ENCODE measurements at regions of chrX and their contacts with region 1.

Region 1: DNA sequence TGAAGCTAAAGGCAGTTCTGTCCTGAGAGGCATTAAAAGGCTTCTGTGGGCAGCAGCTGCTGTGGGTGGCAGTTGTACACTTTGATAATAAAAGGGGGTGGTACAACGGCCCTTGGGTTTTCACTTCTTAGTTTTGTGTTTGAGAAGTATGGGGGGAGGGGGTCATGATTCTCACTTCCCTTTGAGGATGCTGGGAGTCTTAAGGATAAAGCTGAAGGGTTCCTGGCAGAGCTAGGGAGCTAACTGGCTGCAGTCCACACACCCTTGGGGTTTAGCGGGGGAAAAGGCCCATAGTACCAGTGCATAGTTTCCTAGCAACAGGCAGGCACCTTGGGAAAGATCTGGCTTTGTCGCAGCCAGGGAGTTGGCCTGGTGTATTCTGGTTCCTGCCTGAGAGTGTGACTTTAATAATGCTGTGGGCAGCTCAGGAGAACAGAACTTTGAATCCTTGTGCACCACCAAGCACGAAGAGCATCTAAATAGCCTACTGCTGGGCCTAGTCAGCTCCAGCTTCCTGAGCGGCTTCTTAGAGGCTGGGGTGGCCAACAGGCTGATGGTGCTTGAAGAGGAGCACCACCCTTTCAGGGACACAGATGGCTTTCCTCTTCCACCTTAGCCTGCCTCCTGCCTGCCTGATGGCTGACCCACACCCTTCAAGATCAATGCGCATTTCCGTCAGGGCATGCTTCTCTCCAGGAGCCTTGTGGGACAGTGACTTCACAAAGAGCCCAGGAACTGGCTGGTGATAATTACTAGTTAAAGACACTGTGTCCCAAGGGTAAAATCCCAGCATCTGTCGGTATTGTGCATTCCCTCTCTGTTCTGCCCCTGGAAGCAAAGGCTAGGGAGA is 12.5 kb downstream of the ZBTB33 start:
- DNase-seq: no peak
- H3K4me3 Mint-ChIP-seq: no peak overlapping the region
- H3K27ac Mint-ChIP-seq: no peak overlapping the region
- H3K4me1 Mint-ChIP-seq: peaks cover 11% of the 10 kb centered on the region
- H3K27me3 Mint-ChIP-seq: peaks cover 14% of the 10 kb centered on the region
- CTCF ChIP-seq: no peak

Region 2: GRCh38 chrX:119382606-119383005 is 880.5 kb before region 1 on chrX:
- CTCF ChIA-PET with region 1: no interaction called
- POLR2A ChIA-PET with region 1: no interaction called
- intact Hi-C with region 1: no loop called
- DNase-seq: no peak
- H3K4me3 Mint-ChIP-seq: no peak overlapping the region
- H3K27ac Mint-ChIP-seq: no peak overlapping the region
- H3K4me1 Mint-ChIP-seq: no peaks in the 10 kb centered on the region
- H3K27me3 Mint-ChIP-seq: peaks cover 11% of the 10 kb centered on the region
- CTCF ChIP-seq: no peak

Region 3: GRCh38 chrX:120244735-120245498 is 18.2 kb before region 1 on chrX:
- CTCF ChIA-PET with region 1: interaction called, 3 read pairs
- POLR2A ChIA-PET with region 1: interaction called, 26 read pairs
- intact Hi-C with region 1: no loop called
- DNase-seq: peak; percentile 82
- H3K4me3 Mint-ChIP-seq: peak overlapping the region; percentile 87
- H3K27ac Mint-ChIP-seq: peak overlapping the region; percentile 92
- H3K4me1 Mint-ChIP-seq: peaks cover 6% of the 10 kb centered on the region
- H3K27me3 Mint-ChIP-seq: peaks cover 58% of the 10 kb centered on the region
- CTCF ChIP-seq: no peak

Region 4: GRCh38 chrX:120281021-120281624 is 18.0 kb after region 1 on chrX:
- CTCF ChIA-PET with region 1: no interaction called
- POLR2A ChIA-PET with region 1: no interaction called
- intact Hi-C with region 1: no loop called
- DNase-seq: no peak
- H3K4me3 Mint-ChIP-seq: no peak overlapping the region
- H3K27ac Mint-ChIP-seq: no peak overlapping the region
- H3K4me1 Mint-ChIP-seq: no peaks in the 10 kb centered on the region
- H3K27me3 Mint-ChIP-seq: peaks cover 28% of the 10 kb centered on the region
- CTCF ChIP-seq: no peak